ENCODE measurements at regions of chr12 and their contacts with region 1.

Region 1: GRCh38 chr12:5191803-5192535 is 148.3 kb downstream of the KCNA5 start:
- DNase-seq: no peak
- ATAC-seq: no peak
- H3K4me3 ChIP-seq: no peak overlapping the region
- H3K27ac ChIP-seq: no peak overlapping the region
- H3K4me1 ChIP-seq: no peaks in the 10 kb centered on the region
- H3K27me3 ChIP-seq: peaks cover 1 to 4% of the 10 kb centered on the region in 2 experiments; a peak in 2 of 4 replicates
- CTCF ChIP-seq: no peak
- EP300 ChIP-seq: no peak
- POLR2A ChIP-seq: no peak
- RAD21 ChIP-seq: no peak

Region 2: GRCh38 chr12:5154091-5154490 is 37.9 kb before region 1 on chr12:
- CTCF ChIA-PET with region 1: no interaction called
- POLR2A ChIA-PET with region 1: no interaction called
- RAD21 ChIA-PET with region 1: no interaction called
- SMC1A ChIA-PET with region 1: no interaction called
- in situ Hi-C with region 1: no loop called
- intact Hi-C with region 1: no loop called
- DNase-seq: no peak
- ATAC-seq: no peak
- H3K4me3 ChIP-seq: no peak overlapping the region
- H3K27ac ChIP-seq: no peak overlapping the region
- H3K4me1 ChIP-seq: no peaks in the 10 kb centered on the region
- H3K27me3 ChIP-seq: peaks cover 0 to 11% of the 10 kb centered on the region in 2 experiments
- CTCF ChIP-seq: no peak
- EP300 ChIP-seq: no peak
- POLR2A ChIP-seq: no peak
- RAD21 ChIP-seq: no peak

Region 3: GRCh38 chr12:5213990-5214389 is 22.0 kb after region 1 on chr12:
- CTCF ChIA-PET with region 1: no interaction called
- POLR2A ChIA-PET with region 1: no interaction called
- RAD21 ChIA-PET with region 1: no interaction called
- SMC1A ChIA-PET with region 1: no interaction called
- in situ Hi-C with region 1: no loop called
- intact Hi-C with region 1: loop called (anchors 1 kb)
- DNase-seq: no peak
- ATAC-seq: no peak
- H3K4me3 ChIP-seq: no peak overlapping the region
- H3K27ac ChIP-seq: no peak overlapping the region
- H3K4me1 ChIP-seq: no peaks in the 10 kb centered on the region
- H3K27me3 ChIP-seq: no peaks in the 10 kb centered on the region
- CTCF ChIP-seq: no peak
- EP300 ChIP-seq: no peak
- POLR2A ChIP-seq: no peak
- RAD21 ChIP-seq: no peak